PC-9 (cell line): ENCODE measurements at regions of chr11 and their contacts with region 1.

Region 1: DNA sequence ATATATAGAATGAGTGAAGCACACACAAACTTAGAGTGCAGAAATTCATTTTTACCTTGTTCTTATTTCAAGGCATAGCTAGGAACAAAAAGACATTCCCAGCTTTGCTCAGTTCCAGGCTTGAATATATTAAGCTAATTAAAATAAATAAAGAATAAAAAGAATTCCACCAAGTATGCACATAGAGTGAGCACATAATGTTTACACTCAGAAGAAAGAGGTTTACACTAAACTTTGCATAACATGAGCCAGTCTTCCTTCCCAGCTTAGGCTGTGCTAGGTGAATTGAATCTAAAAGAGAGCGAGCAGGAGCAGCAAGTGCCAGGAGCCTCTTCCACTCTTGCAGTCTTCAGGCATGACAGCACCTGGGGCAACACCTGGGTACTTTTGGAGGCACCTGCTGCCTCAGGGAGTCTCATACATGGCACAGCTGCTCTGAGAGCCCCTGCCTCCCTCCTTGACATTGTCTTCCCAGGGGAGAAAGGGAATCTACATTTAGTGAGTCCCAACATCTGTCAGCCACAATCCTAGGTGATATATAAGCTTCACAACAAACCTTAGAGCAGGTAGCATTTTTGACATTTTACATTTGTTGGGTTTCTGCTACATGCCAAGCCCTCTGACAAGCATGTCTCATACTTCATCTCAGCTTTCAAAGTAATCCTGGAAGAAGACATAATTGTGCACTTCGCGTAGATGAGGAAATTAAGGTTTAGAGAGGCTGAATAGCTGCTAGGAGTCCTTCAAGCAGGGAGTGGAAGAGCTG is 732.7 kb upstream of the TENM4 start:
- DNase-seq: no peak
- H3K4me3 ChIP-seq: no peak overlapping the region
- H3K27ac ChIP-seq: no peak overlapping the region
- H3K4me1 ChIP-seq: no peaks in the 10 kb centered on the region
- H3K27me3 ChIP-seq: no peaks in the 10 kb centered on the region
- CTCF ChIP-seq: no peak

Region 2: DNA sequence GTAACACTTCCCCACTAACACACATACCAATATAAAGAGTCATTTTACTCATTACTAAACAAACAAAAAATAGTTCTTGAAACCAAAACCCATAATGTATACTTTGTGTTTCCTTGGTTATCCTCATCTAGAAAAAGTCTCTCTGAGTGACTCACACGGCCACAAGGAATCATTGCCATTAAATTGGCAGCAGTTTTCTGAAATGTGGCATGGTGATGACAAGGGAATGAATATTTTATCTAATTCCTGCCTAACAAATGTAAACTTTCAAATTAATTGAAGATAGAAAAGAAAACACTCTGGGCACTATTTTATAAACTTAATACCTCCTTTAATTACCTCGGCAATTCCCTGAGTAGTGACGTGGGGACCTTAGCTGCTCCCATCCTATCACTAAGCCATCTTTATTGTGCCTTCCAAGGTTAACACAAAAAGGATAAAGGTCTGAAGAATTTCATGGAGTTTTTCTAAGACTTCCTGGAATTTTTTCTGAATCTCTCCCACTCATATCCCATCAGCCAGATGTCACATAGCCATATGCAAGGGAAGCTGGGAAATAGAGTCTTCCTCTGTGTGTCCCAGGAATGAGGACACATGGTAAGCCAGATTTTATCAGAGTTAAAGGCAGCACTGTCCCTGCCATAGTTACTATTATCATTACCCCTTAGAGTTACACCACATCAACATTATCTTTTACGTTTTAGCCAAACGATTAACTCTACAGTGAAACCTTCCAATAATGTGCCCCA is 124.5 kb after region 1 on chr11:
- CTCF ChIA-PET with region 1: no interaction called
- POLR2A ChIA-PET with region 1: interaction called, 10 read pairs
- intact Hi-C with region 1: loop called (anchors 1 kb)
- DNase-seq: peak; percentile 51 to 88
- H3K4me3 ChIP-seq: no peak overlapping the region; the same call in 1 of the 2 replicates
- H3K27ac ChIP-seq: peak overlapping the region; percentile 64
- H3K4me1 ChIP-seq: peaks cover 17% of the 10 kb centered on the region
- H3K27me3 ChIP-seq: no peaks in the 10 kb centered on the region
- CTCF ChIP-seq: no peak